Mammary epithelial cell (primary cell): ENCODE measurements at regions of chr6 and their contacts with region 1.

Region 1: GRCh38 chr6:110537208-110538123 is 61.1 kb upstream of the SLC22A16 start:
- DNase-seq: peak; percentile 99
- H3K4me3 ChIP-seq: no peak overlapping the region
- H3K27ac ChIP-seq: peak overlapping the region; percentile 87
- H3K4me1 ChIP-seq: peaks cover 23% of the 10 kb centered on the region
- H3K27me3 ChIP-seq: no peaks in the 10 kb centered on the region
- CTCF ChIP-seq: no peak

Region 2: DNA sequence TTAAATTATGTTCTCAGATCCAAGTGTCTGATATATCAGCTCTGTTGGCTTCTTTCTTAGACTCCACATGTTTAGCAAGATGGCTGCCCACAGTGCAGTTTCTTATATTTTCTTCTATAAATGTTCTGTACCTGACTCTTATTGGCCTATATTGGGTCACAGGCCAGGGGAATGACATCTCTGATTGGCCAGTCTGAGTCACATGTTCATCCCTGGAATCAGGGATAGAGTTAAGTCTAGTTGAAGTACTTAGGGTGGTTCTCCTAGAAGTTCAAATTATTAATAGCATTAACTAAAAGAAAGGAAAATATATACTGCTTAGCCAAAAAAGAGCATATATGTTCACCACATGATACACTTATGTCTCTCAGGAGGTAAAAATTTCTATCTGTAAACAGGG is 44.2 kb after region 1 on chr6:
- CTCF ChIA-PET with region 1: no interaction called
- dilution Hi-C with region 1: no loop called
- in situ Hi-C with region 1: no loop called
- intact Hi-C with region 1: no loop called
- DNase-seq: peak; percentile 19
- H3K4me3 ChIP-seq: no peak overlapping the region
- H3K27ac ChIP-seq: no peak overlapping the region
- H3K4me1 ChIP-seq: no peaks in the 10 kb centered on the region
- H3K27me3 ChIP-seq: no peaks in the 10 kb centered on the region
- CTCF ChIP-seq: no peak

Region 3: GRCh38 chr6:110629153-110629552 is 91.7 kb after region 1 on chr6:
- CTCF ChIA-PET with region 1: no interaction called
- dilution Hi-C with region 1: no loop called
- in situ Hi-C with region 1: no loop called
- intact Hi-C with region 1: no loop called
- DNase-seq: no peak
- H3K4me3 ChIP-seq: no peak overlapping the region
- H3K27ac ChIP-seq: no peak overlapping the region
- H3K4me1 ChIP-seq: peaks cover 15% of the 10 kb centered on the region
- H3K27me3 ChIP-seq: no peaks in the 10 kb centered on the region
- CTCF ChIP-seq: no peak

Region 4: GRCh38 chr6:110676396-110676795 is 138.9 kb after region 1 on chr6:
- CTCF ChIA-PET with region 1: no interaction called
- dilution Hi-C with region 1: loop called (anchors 5 kb)
- in situ Hi-C with region 1: no loop called
- intact Hi-C with region 1: no loop called
- DNase-seq: no peak
- H3K4me3 ChIP-seq: no peak overlapping the region
- H3K27ac ChIP-seq: no peak overlapping the region
- H3K4me1 ChIP-seq: no peaks in the 10 kb centered on the region
- H3K27me3 ChIP-seq: no peaks in the 10 kb centered on the region
- CTCF ChIP-seq: no peak

Region 5: GRCh38 chr6:110958329-110959192 is 421.1 kb after region 1 on chr6 and contains the start of gene GTF3C6:
- CTCF ChIA-PET with region 1: no interaction called
- dilution Hi-C with region 1: loop called (anchors 10 kb)
- in situ Hi-C with region 1: no loop called
- intact Hi-C with region 1: no loop called
- DNase-seq: peak; percentile 88
- H3K4me3 ChIP-seq: peak within 1 kb of the TSS; percentile 56 to 94 (median 78)
- H3K27ac ChIP-seq: peak within 1 kb of the TSS; percentile 80
- H3K4me1 ChIP-seq: peaks cover 5% of the 10 kb centered on the region
- H3K27me3 ChIP-seq: no peaks in the 10 kb centered on the region
- CTCF ChIP-seq: no peak
- total RNA-seq, gene GTF3C6: 17.5 to 74.7 TPM

Region 6: DNA sequence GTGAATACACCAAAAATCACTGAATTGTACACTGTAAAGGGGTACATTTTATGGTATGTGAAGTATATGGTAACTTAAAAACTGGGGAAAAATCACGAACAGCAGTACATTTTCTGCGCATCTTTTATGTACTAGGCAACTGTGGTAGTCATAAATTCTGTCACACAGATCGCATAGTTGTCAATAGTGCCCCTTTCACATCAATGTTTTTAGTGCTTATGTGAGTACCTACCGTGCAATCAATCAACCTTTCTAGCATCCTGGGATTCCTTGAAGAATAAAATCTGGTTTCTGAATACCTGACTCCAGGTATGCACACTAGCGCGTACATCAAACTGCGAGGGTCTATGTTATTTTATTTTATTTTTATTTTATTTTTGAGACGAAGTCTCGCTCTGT is 443.7 kb after region 1 on chr6:
- CTCF ChIA-PET with region 1: no interaction called
- dilution Hi-C with region 1: loop called (anchors 10 kb)
- in situ Hi-C with region 1: no loop called
- intact Hi-C with region 1: no loop called
- DNase-seq: no peak
- H3K4me3 ChIP-seq: peak overlapping the region; percentile 55 to 81 (median 79)
- H3K27ac ChIP-seq: peak overlapping the region; percentile 83
- H3K4me1 ChIP-seq: peaks cover 9% of the 10 kb centered on the region
- H3K27me3 ChIP-seq: no peaks in the 10 kb centered on the region
- CTCF ChIP-seq: no peak

Region 7: GRCh38 chr6:110999634-111000270 is 462.3 kb after region 1 on chr6:
- CTCF ChIA-PET with region 1: no interaction called
- dilution Hi-C with region 1: no loop called
- in situ Hi-C with region 1: loop called in 1 of 2 experiments (anchors 5 kb)
- intact Hi-C with region 1: no loop called
- DNase-seq: peak; percentile 16
- H3K4me3 ChIP-seq: no peak overlapping the region
- H3K27ac ChIP-seq: no peak overlapping the region
- H3K4me1 ChIP-seq: no peaks in the 10 kb centered on the region
- H3K27me3 ChIP-seq: no peaks in the 10 kb centered on the region
- CTCF ChIP-seq: peak; percentile 21 to 48

Region 8: DNA sequence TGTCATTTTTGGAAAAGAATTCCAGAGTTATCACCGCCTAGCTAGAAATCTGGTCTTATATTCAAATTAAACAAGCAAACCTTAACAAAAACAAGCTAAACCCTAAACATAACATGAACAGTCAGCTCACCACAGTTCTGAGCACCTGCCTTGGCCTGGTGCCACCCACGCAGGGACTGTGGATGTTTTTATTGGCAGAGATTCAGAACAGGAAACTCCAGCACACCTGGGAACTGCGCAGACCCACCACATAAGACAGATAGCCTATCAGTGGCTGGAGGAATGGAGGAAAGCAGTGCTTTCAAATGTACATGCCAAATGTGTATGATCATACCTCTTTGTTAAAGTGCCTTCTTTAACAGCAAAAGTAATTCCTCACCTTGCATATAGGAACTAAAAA is 558.8 kb after region 1 on chr6:
- CTCF ChIA-PET with region 1: no interaction called
- dilution Hi-C with region 1: no loop called
- in situ Hi-C with region 1: no loop called
- intact Hi-C with region 1: no loop called
- DNase-seq: peak; percentile 91
- H3K4me3 ChIP-seq: no peak overlapping the region
- H3K27ac ChIP-seq: no peak overlapping the region
- H3K4me1 ChIP-seq: peaks cover 8% of the 10 kb centered on the region
- H3K27me3 ChIP-seq: peaks cover 3% of the 10 kb centered on the region
- CTCF ChIP-seq: no peak